ENCODE measurements at regions of chr20 and their contacts with region 1.

Region 1: GRCh38 chr20:32652739-32653526 is 20.8 kb downstream of the C20orf203 start:
- DNase-seq: peak; percentile 88
- CTCF ChIP-seq: peak; percentile 95

Region 2: GRCh38 chr20:32387252-32387651 is 265.7 kb before region 1 on chr20:
- CTCF ChIA-PET with region 1: no interaction called
- POLR2A ChIA-PET with region 1: no interaction called
- DNase-seq: peak; percentile 25
- CTCF ChIP-seq: no peak

Region 3: GRCh38 chr20:32516583-32517517 is 136.1 kb before region 1 on chr20:
- CTCF ChIA-PET with region 1: interaction called, 171 read pairs
- POLR2A ChIA-PET with region 1: no interaction called
- DNase-seq: no peak
- CTCF ChIP-seq: no peak

Region 4: GRCh38 chr20:32534661-32535240 is 118.2 kb before region 1 on chr20:
- CTCF ChIA-PET with region 1: interaction called, 20 read pairs
- POLR2A ChIA-PET with region 1: no interaction called
- DNase-seq: no peak
- CTCF ChIP-seq: no peak

Region 5: GRCh38 chr20:32664678-32665159 is 11.8 kb after region 1 on chr20:
- CTCF ChIA-PET with region 1: interaction called, 15 read pairs
- POLR2A ChIA-PET with region 1: no interaction called
- DNase-seq: no peak
- CTCF ChIP-seq: no peak

Region 6: GRCh38 chr20:33291830-33292355 is 639.0 kb after region 1 on chr20:
- CTCF ChIA-PET with region 1: no interaction called
- POLR2A ChIA-PET with region 1: no interaction called
- DNase-seq: peak; percentile 73
- CTCF ChIP-seq: peak; percentile 79